ENCODE measurements at regions of chr20 and their contacts with region 1.

Region 1: GRCh38 chr20:45971675-45972499 is at the start of gene ZNF335:
- DNase-seq: peak; percentile 86 to 97 (median 92)
- ATAC-seq: peak; percentile 84 to 87 (median 86)
- H3K4me3 ChIP-seq: peak within 1 kb of the TSS; percentile 93 to 99
- H3K4me3 Mint-ChIP-seq: peak within 1 kb of the TSS; percentile 81 to 82 (median 81)
- H3K27ac ChIP-seq: peak within 1 kb of the TSS; percentile 99
- H3K27ac Mint-ChIP-seq: peak within 1 kb of the TSS; percentile 100
- H3K4me1 ChIP-seq: peaks cover 13 to 38% of the 10 kb centered on the region in 2 experiments
- H3K4me1 Mint-ChIP-seq: peaks cover 27 to 31% (median 29%) of the 10 kb centered on the region in 3 donors
- H3K27me3 ChIP-seq: no peaks in the 10 kb centered on the region
- H3K27me3 Mint-ChIP-seq: peaks cover 0 to 3% of the 10 kb centered on the region in 2 donors
- total RNA-seq, gene ZNF335: 58.6 to 106 (median 68.3) TPM

Region 2: DNA sequence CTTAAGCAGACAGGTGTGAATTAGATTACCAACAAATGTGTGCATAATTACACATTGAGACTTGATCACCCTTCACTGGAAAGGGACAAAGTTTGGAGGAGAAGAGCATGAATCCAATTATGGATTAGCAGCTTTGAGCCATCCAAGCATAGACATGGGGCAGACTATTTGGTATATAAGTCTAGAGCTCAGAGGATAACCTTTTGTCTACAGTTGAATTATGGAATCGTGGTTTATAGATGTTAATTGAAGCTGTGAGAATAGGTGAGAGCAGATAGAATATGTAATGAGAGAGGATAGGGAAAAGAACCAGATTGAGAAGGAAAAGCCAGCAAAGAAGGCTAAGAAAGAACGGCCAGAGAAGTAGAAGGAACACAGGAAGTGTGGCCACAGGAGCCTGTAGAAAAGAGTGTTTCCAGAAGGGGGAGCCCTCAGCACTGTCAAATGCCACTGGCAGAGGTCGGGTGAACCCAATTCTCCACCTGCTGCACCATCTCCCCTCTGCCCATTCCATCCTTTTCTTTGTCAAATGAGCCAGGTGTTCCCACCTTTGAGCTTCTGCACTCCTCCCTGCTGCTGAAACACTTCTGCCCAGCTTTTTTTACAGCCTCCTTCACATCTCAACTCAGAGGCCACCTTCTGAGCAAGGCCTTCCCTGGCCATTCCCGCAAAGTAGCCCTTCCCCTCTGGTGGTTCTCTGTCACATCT is 172.8 kb before region 1 on chr20:
- CTCF ChIA-PET with region 1: interaction called, 3 to 17 read pairs
- POLR2A ChIA-PET with region 1: no interaction called
- DNase-seq: peak; percentile 24 to 79 (median 52)
- ATAC-seq: peak; percentile 93 to 98 (median 95)
- H3K4me3 ChIP-seq: no peak overlapping the region
- H3K4me3 Mint-ChIP-seq: no peak overlapping the region
- H3K27ac ChIP-seq: no peak overlapping the region
- H3K27ac Mint-ChIP-seq: peak overlapping the region; percentile 50 to 69
- H3K4me1 ChIP-seq: peaks cover 0 to 9% of the 10 kb centered on the region in 2 experiments
- H3K4me1 Mint-ChIP-seq: peaks cover 10 to 13% (median 10%) of the 10 kb centered on the region in 3 donors
- H3K27me3 ChIP-seq: no peaks in the 10 kb centered on the region
- H3K27me3 Mint-ChIP-seq: no peaks in the 10 kb centered on the region

Region 3: DNA sequence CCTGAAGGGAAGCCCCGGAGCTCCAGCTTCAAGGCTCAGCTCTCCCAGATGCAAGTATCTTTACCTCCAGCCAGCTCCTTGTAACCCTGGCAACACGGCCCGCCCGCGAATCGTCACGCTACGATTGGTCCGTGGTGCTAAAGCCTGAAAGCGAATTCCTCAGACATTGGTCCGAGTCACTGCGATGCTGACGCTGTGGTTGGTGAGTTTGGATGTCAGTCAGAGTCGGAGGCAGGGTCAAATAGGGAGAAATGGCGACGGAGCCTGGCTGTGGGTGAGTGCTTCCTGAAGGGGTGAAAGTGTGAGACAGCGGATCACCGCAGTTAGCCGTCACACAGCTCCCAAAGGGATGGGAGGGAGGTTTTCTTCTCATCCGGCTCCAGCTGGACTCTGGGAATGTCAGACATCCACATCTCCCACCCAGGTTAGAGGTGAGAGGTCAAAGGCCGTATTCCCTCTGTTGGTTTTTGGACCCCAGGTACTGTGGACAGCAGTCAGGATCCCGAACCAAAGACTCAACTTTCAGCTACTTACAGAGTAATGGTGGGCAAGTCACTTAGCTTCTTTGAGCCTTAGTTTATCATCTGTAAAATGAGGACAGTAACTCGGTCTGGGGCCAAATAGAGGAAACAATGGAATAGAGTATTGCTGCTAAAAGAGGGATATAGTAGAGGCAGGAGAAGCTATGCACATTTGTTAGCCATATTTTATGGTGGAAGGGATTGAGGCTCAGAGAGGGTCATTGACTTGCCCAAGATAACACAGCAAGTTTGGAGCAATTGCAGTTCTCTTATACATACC is 90.7 kb before region 1 on chr20 and contains the start of gene ZSWIM1:
- CTCF ChIA-PET with region 1: interaction called, 3 to 11 read pairs
- POLR2A ChIA-PET with region 1: interaction called in 1 of 2 experiments, 5 read pairs
- DNase-seq: peak; percentile 95 to 100 (median 98)
- ATAC-seq: peak; percentile 96 to 99 (median 96)
- H3K4me3 ChIP-seq: peak within 1 kb of the TSS; percentile 66 to 85
- H3K4me3 Mint-ChIP-seq: peak within 1 kb of the TSS; percentile 81 to 90 (median 88)
- H3K27ac ChIP-seq: peak within 1 kb of the TSS; percentile 71
- H3K27ac Mint-ChIP-seq: peak within 1 kb of the TSS; percentile 89 to 95
- H3K4me1 ChIP-seq: peaks cover 5 to 32% of the 10 kb centered on the region in 2 experiments
- H3K4me1 Mint-ChIP-seq: peaks cover 43 to 44% (median 43%) of the 10 kb centered on the region in 3 donors
- H3K27me3 ChIP-seq: no peaks in the 10 kb centered on the region
- H3K27me3 Mint-ChIP-seq: no peaks in the 10 kb centered on the region
- total RNA-seq, gene ZSWIM1: 8.3 to 17.2 (median 14.6) TPM

Region 4: GRCh38 chr20:45957081-45957941 is 14.6 kb before region 1 on chr20:
- CTCF ChIA-PET with region 1: interaction called, 3 to 10 read pairs
- POLR2A ChIA-PET with region 1: interaction called, 4 to 7 read pairs
- DNase-seq: no peak
- ATAC-seq: peak in 1 of 4 experiments; percentile 17
- H3K4me3 ChIP-seq: no peak overlapping the region
- H3K4me3 Mint-ChIP-seq: no peak overlapping the region
- H3K27ac ChIP-seq: no peak overlapping the region
- H3K27ac Mint-ChIP-seq: no peak overlapping the region
- H3K4me1 ChIP-seq: peaks cover 0 to 1% of the 10 kb centered on the region in 2 experiments
- H3K4me1 Mint-ChIP-seq: no peaks in the 10 kb centered on the region
- H3K27me3 ChIP-seq: no peaks in the 10 kb centered on the region
- H3K27me3 Mint-ChIP-seq: no peaks in the 10 kb centered on the region